Dendritic cell treated with granulocyte-macrophage colony-stimulating factor and Interleukin-4, amounts not matched to agents 40 ng/mL and 50 ng/mL, for 4 days (primary cell): ENCODE measurements at regions of chr2 and their contacts with region 1.

Region 1: GRCh38 chr2:240913810-240914644 is 7.9 kb downstream of the CROCC2 start:
- H3K4me3 Mint-ChIP-seq: no peak overlapping the region
- H3K27ac Mint-ChIP-seq: no peak overlapping the region
- H3K4me1 Mint-ChIP-seq: no peaks in the 10 kb centered on the region
- H3K27me3 Mint-ChIP-seq: peaks cover 55% of the 10 kb centered on the region

Region 2: GRCh38 chr2:240893363-240893844 is 20.6 kb before region 1 on chr2:
- intact Hi-C with region 1: no loop called
- H3K4me3 Mint-ChIP-seq: no peak overlapping the region
- H3K27ac Mint-ChIP-seq: no peak overlapping the region
- H3K4me1 Mint-ChIP-seq: peaks cover 5% of the 10 kb centered on the region
- H3K27me3 Mint-ChIP-seq: peaks cover 5% of the 10 kb centered on the region

Region 3: DNA sequence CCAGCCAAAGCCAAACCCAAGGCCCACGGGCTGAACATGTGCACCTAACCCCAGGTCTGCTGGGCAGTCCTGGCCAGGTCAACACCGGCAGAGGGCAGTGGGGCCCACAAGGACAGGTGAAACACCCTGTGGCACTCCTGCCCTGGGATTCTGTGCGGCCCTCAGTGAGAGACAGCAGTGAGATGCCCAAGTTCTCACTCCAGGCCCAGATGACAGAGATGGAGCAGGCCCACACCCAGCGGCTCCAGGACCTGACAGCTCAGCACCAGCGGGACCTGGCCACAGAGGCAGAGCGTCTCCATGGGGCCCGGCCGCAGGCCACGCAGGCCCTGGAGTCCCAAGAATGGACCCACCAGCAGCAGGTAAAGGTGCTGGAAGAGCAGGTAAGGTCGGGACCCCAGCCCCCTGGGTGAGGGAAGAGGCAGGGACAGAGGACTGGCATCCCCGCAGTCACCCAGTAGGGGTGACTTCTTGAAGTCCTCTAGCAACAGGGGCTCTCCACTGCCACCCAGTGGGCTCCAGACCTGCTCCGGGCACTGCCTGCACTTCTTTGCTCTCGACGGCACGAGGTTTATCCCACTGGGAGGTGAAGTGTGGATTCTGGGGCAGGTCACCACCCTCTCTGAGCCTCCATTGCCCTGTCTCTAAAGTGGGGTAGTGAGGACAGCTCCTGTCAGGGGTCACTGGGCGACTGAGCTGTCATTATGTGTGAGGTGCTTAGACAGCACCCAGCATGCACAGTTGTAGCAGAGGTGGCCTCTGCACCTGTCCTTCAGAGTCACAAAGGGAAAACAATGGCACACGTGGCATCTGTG is 75.6 kb after region 1 on chr2:
- intact Hi-C with region 1: loop called (anchors 5 kb)
- H3K4me3 Mint-ChIP-seq: no peak overlapping the region
- H3K27ac Mint-ChIP-seq: no peak overlapping the region
- H3K4me1 Mint-ChIP-seq: peaks cover 44% of the 10 kb centered on the region
- H3K27me3 Mint-ChIP-seq: peaks cover 37% of the 10 kb centered on the region

Region 4: GRCh38 chr2:241499146-241499965 is 585.3 kb after region 1 on chr2:
- intact Hi-C with region 1: no loop called
- H3K4me3 Mint-ChIP-seq: no peak overlapping the region
- H3K27ac Mint-ChIP-seq: no peak overlapping the region
- H3K4me1 Mint-ChIP-seq: no peaks in the 10 kb centered on the region
- H3K27me3 Mint-ChIP-seq: no peaks in the 10 kb centered on the region